ENCODE measurements at regions of chr5 and their contacts with region 1.

Region 1: GRCh38 chr5:72030237-72030636 is 77.0 kb upstream of the MAP1B start:
- DNase-seq: no peak
- ATAC-seq: no peak
- H3K4me3 ChIP-seq: no peak overlapping the region
- H3K4me3 Mint-ChIP-seq: no peak overlapping the region
- H3K27ac ChIP-seq: no peak overlapping the region
- H3K27ac Mint-ChIP-seq: no peak overlapping the region
- H3K4me1 ChIP-seq: no peaks in the 10 kb centered on the region
- H3K4me1 Mint-ChIP-seq: no peaks in the 10 kb centered on the region
- H3K27me3 ChIP-seq: no peaks in the 10 kb centered on the region
- H3K27me3 Mint-ChIP-seq: peaks cover 14% of the 10 kb centered on the region
- CTCF ChIP-seq: no peak

Region 2: DNA sequence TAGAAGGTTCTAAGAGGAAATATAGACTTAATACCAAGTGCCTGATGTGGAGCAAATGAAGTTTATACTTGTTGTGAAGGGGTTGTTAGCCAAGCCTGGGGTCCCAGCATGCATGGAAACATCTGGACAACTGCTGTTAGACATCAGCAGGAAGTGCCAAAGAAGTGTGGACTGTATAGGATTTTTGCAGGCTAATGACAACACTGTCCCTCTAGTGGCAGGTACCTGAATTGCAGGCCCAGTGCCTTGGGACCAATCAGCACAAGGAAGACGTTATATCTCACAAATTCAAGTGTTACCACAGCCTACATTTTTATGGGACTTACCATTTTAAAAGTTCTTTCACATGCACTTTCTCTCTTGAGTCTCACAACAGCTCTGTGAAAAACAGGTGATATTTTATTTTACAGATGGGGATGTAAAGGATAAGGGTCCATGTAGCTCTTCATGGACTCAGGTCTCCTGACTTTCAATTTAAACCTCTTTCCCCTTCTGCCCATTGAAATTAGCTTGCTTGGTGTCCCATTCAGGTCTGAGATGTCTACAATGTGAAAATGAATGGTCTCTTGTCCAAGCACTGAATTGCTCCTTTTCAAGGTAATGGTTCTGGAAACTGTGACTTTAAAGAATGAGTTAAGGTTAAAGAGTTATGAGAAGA is 12.0 kb before region 1 on chr5:
- CTCF ChIA-PET with region 1: interaction called, 11 read pairs
- POLR2A ChIA-PET with region 1: no interaction called
- intact Hi-C with region 1: no loop called
- DNase-seq: peak; percentile 18 to 71 (median 49)
- ATAC-seq: peak; percentile 55
- H3K4me3 ChIP-seq: no peak overlapping the region
- H3K4me3 Mint-ChIP-seq: no peak overlapping the region
- H3K27ac ChIP-seq: no peak overlapping the region
- H3K27ac Mint-ChIP-seq: no peak overlapping the region
- H3K4me1 ChIP-seq: no peaks in the 10 kb centered on the region
- H3K4me1 Mint-ChIP-seq: no peaks in the 10 kb centered on the region
- H3K27me3 ChIP-seq: peaks cover 0 to 2% of the 10 kb centered on the region in 2 experiments
- H3K27me3 Mint-ChIP-seq: peaks cover 26% of the 10 kb centered on the region
- CTCF ChIP-seq: peak; percentile 99

Region 3: DNA sequence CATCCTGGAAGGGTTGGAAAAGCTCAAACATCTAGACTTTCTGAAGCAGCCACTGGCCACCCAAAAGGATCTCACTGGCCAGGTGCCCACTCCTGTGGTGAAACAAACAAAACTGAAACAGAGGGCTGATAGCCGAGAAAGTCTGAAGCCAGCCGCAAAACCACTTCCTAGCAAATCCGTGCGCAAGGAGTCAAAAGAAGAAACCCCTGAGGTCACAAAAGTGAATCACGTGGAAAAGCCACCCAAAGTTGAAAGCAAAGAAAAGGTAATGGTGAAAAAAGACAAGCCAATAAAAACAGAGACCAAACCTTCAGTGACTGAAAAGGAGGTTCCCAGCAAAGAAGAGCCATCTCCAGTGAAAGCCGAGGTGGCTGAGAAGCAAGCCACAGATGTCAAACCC is 164.6 kb after region 1 on chr5:
- CTCF ChIA-PET with region 1: no interaction called
- POLR2A ChIA-PET with region 1: no interaction called
- intact Hi-C with region 1: no loop called
- DNase-seq: peak in 6 of 9 experiments; percentile 7 to 78 (median 34)
- ATAC-seq: peak; percentile 51
- H3K4me3 ChIP-seq: no peak overlapping the region
- H3K4me3 Mint-ChIP-seq: no peak overlapping the region
- H3K27ac ChIP-seq: no peak overlapping the region
- H3K27ac Mint-ChIP-seq: no peak overlapping the region
- H3K4me1 ChIP-seq: no peaks in the 10 kb centered on the region
- H3K4me1 Mint-ChIP-seq: peaks cover 10% of the 10 kb centered on the region
- H3K27me3 ChIP-seq: peaks cover 0 to 15% of the 10 kb centered on the region in 2 experiments
- H3K27me3 Mint-ChIP-seq: peaks cover 33% of the 10 kb centered on the region
- CTCF ChIP-seq: no peak

Measured in CD8-positive, alpha-beta T cell (primary cell).